MCF 10A (cell line): ENCODE measurements at regions of chr11 and their contacts with region 1.

Region 1: GRCh38 chr11:68632802-68633201 is 51.5 kb upstream of the GAL start:
- DNase-seq: peak; percentile 79
- H3K4me3 Mint-ChIP-seq: no peak overlapping the region
- H3K27ac Mint-ChIP-seq: no peak overlapping the region
- H3K4me1 Mint-ChIP-seq: no peaks in the 10 kb centered on the region
- H3K27me3 Mint-ChIP-seq: peaks cover 35% of the 10 kb centered on the region
- CTCF ChIP-seq: peak; percentile 61

Region 2: GRCh38 chr11:68584097-68584496 is 48.7 kb before region 1 on chr11:
- CTCF ChIA-PET with region 1: no interaction called
- POLR2A ChIA-PET with region 1: no interaction called
- intact Hi-C with region 1: no loop called
- DNase-seq: peak; percentile 37
- H3K4me3 Mint-ChIP-seq: no peak overlapping the region
- H3K27ac Mint-ChIP-seq: no peak overlapping the region
- H3K4me1 Mint-ChIP-seq: peaks cover 18% of the 10 kb centered on the region
- H3K27me3 Mint-ChIP-seq: no peaks in the 10 kb centered on the region
- CTCF ChIP-seq: peak; percentile 51

Region 3: GRCh38 chr11:68798221-68798813 is 165.5 kb after region 1 on chr11:
- CTCF ChIA-PET with region 1: interaction called, 4 read pairs
- POLR2A ChIA-PET with region 1: no interaction called
- intact Hi-C with region 1: loop called (anchors 2 kb)
- DNase-seq: peak; percentile 40
- H3K4me3 Mint-ChIP-seq: no peak overlapping the region
- H3K27ac Mint-ChIP-seq: no peak overlapping the region
- H3K4me1 Mint-ChIP-seq: no peaks in the 10 kb centered on the region
- H3K27me3 Mint-ChIP-seq: no peaks in the 10 kb centered on the region
- CTCF ChIP-seq: peak; percentile 56

Region 4: DNA sequence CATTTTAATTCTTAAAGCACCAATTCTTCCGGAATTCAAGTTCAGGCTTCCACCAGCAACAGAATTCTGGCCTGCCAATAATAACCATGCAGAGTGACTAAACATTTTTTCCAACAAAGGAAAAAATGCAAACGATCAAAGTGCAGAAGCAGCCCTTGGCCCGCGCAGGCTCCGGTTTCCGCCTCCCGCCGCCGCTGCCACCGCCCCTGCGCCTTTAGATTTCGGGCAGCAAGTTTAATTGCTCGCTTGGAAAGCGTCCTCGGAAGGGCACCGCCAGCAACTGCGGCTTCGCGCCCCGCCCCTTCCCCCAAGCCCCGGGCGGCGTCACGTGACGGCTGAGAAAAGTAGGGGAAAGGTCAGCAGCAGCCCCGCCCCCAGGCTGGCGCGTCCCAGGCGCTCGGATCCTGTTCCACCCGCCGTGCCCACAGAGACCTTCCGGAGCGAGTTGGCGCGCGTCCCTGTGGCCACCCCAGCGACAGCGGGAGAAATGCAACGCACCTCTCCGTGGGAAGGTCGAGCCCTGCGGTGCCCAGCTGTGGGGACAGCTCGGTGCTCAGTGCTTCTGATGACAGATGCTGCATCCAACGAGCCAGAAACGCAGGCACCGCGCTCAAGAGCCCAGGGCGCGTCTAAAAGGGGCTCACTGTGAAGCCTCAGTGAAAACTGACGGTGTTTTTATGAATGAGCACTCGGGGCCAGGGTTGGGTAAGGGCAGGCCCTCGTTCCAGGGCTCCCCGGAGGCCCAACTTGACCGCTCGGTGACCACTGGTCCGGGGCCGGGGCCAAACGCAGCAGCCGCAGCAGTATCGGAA is 206.5 kb after region 1 on chr11:
- CTCF ChIA-PET with region 1: interaction called, 3 read pairs
- POLR2A ChIA-PET with region 1: no interaction called
- intact Hi-C with region 1: loop called (anchors 1 kb)
- DNase-seq: peak; percentile 93
- H3K4me3 Mint-ChIP-seq: peak overlapping the region; percentile 73
- H3K27ac Mint-ChIP-seq: peak overlapping the region; percentile 27
- H3K4me1 Mint-ChIP-seq: peaks cover 24% of the 10 kb centered on the region
- H3K27me3 Mint-ChIP-seq: no peaks in the 10 kb centered on the region
- CTCF ChIP-seq: no peak